A549 (cell line): ENCODE measurements at regions of chr5 and their contacts with region 1.

Region 1: DNA sequence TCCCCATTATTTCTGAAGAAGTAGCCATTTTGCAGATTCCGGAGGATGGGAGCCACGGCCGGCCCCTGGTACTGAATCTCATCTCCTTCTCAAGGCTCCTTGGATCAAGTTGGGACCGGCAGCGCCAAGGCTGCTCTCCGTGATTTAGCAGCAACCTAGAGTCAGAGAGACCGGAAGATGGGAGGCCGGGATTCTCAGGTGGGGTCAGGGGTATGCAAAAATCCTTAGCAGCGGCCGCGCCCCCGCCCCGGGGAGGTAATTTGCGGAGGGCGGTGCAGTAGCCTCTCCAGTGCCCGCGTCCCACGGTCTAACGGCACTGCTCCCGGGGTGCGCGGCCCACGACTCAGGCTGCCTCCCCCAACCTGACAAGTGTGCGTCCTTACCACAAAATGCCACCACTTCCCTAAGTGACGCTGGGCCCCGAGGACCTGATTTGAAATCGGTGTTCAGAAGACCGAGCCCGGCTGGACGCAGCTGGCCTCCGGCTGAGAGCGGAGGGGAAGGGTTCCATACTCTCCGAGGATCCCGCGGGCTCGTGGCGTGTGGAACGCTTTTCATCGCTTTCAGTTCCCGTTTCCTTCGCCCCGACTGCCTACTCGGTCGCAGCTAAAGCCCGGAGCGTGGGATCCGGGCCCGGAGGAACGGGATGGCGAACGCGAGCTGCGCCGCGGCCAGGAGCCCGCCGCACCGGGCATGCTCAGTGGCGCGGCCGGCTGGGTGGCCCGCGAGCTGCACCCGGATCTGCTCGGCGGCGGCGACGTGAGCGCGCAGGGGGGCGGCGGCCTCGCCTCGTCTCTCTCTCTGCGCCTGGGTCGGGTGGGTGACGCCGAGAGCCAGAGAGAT is at the start of gene SCAMP1:
- DNase-seq: peak; percentile 91 to 92
- ATAC-seq: peak; percentile 92 to 96
- H3K4me3 ChIP-seq: peak within 1 kb of the TSS; percentile 96
- H3K27ac ChIP-seq: peak within 1 kb of the TSS; percentile 96 to 98
- H3K4me1 ChIP-seq: peaks cover 18% of the 10 kb centered on the region
- CTCF ChIP-seq: no peak
- EP300 ChIP-seq: no peak
- POLR2A ChIP-seq: peak; percentile 65
- RAD21 ChIP-seq: peak; percentile 10 to 16; a peak in 2 of 5 replicates
- polyA plus RNA-seq, gene SCAMP1: 42.2 and 47.4 TPM in 2 replicates

Region 2: GRCh38 chr5:78162253-78162862 is 197.7 kb before region 1 on chr5:
- CTCF ChIA-PET with region 1: no interaction called
- POLR2A ChIA-PET with region 1: no interaction called
- DNase-seq: peak; percentile 10 to 57
- ATAC-seq: peak in 1 of 2 experiments; percentile 58; a peak in 1 of 6 replicates
- H3K4me3 ChIP-seq: no peak overlapping the region
- H3K27ac ChIP-seq: no peak overlapping the region
- H3K4me1 ChIP-seq: no peaks in the 10 kb centered on the region
- CTCF ChIP-seq: peak; percentile 69
- EP300 ChIP-seq: no peak
- POLR2A ChIP-seq: no peak
- RAD21 ChIP-seq: peak; percentile 72 to 74

Region 3: DNA sequence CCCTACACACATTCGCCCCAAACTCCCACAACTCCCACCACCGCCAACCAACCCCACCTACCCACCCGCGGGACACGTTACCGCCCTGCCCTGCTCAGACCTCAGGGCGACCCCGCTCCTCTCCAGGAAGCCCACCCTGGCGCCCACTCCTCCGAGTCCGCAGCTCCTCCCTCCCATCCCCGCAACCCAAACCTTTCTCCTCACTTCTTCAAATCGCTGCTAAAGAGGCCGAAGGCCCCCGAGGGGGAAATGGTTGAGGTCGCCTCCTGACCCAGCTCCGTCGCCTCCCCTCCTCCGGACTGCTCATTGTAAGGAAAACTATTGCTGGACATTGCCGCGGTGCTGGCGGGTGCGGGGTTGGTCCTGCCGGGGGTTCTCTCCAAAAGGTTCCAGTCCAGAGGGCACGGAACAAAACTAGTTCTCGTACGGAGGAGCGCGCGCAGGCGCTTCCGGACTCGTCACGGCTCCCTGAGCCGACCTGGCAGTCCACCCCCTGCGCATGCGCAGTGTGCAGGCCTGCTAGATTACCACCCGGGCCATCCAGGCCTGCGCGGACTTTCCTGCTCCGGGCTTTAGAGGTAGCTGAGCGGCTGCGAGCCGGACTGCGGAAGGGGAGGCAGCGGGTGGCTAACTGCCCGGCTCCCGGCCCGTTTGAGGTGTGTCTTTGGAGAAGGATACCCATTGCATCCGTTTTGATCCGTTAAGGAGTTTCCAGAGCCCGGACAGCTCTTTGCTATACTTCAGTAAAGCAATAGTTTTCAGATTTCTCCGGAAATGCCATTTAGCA is 65.6 kb before region 1 on chr5 and contains the start of gene AP3B1:
- CTCF ChIA-PET with region 1: interaction called, 6 read pairs
- POLR2A ChIA-PET with region 1: interaction called, 34 read pairs
- DNase-seq: peak; percentile 92 to 99
- ATAC-seq: peak; percentile 92 to 94
- H3K4me3 ChIP-seq: peak within 1 kb of the TSS; percentile 91
- H3K27ac ChIP-seq: peak within 1 kb of the TSS; percentile 94 to 97
- H3K4me1 ChIP-seq: peaks cover 5% of the 10 kb centered on the region; the same call in 1 of the 3 replicates
- CTCF ChIP-seq: no peak
- EP300 ChIP-seq: no peak
- POLR2A ChIP-seq: peak; percentile 91
- RAD21 ChIP-seq: 0 out of 5 replicates have a peak, but pooled peaks of 1 of the 2 experiments have one; percentile 18
- polyA plus RNA-seq, gene AP3B1: 70.5 and 86.1 TPM in 2 replicates

Region 4: DNA sequence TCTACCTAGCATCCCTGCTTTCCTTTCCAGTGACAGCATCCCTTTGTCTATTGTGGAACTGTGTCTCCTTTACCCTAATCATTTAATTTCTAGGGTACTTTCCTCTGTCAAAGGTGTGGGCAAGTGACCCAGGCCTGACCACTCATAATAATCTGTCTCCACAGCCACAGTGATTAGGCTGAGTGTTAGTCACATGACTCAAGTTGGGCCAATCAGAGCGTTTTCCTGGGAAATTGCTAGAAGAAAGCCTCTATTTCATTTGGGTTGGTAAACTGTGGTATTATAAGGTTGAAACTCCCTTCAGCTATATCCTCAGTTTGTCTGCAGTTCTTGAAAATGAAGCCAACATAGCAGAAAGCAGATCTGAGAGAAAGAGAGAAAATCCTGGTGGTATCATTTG is 51.3 kb before region 1 on chr5:
- CTCF ChIA-PET with region 1: no interaction called
- POLR2A ChIA-PET with region 1: no interaction called
- DNase-seq: no peak
- ATAC-seq: no peak
- H3K4me3 ChIP-seq: no peak overlapping the region
- H3K27ac ChIP-seq: no peak overlapping the region
- H3K4me1 ChIP-seq: no peaks in the 10 kb centered on the region
- CTCF ChIP-seq: no peak
- EP300 ChIP-seq: no peak
- POLR2A ChIP-seq: no peak
- RAD21 ChIP-seq: no peak

Region 5: GRCh38 chr5:78328585-78329173 is 31.4 kb before region 1 on chr5:
- CTCF ChIA-PET with region 1: no interaction called
- POLR2A ChIA-PET with region 1: no interaction called
- DNase-seq: no peak
- ATAC-seq: no peak
- H3K4me3 ChIP-seq: no peak overlapping the region
- H3K27ac ChIP-seq: peak overlapping the region; percentile 14 to 69; a peak in 3 of 6 replicates
- H3K4me1 ChIP-seq: no peaks in the 10 kb centered on the region
- CTCF ChIP-seq: no peak
- EP300 ChIP-seq: no peak
- POLR2A ChIP-seq: no peak
- RAD21 ChIP-seq: no peak